Adrenal gland (tissue), 19 donors: ENCODE measurements at regions of chr16 and their contacts with region 1.

Region 1: GRCh38 chr16:10971560-10971961 is 27.2 kb downstream of the CLEC16A start:
- DNase-seq: peak in 5 of 7 donors; percentile 44 to 74 (median 58)
- H3K4me3 ChIP-seq: no peak overlapping the region
- H3K27ac ChIP-seq: no peak overlapping the region
- H3K4me1 ChIP-seq: no peaks in the 10 kb centered on the region
- H3K27me3 ChIP-seq: no peaks in the 10 kb centered on the region
- CTCF ChIP-seq: peak; percentile 74 to 88 (median 85)
- POLR2A ChIP-seq: no peak

Region 2: GRCh38 chr16:11032922-11033291 is 61.3 kb after region 1 on chr16:
- intact Hi-C with region 1: no loop called
- DNase-seq: peak in 6 of 7 donors; percentile 33 to 66 (median 44)
- H3K4me3 ChIP-seq: no peak overlapping the region
- H3K27ac ChIP-seq: peak overlapping the region in 2 of 5 donors; percentile 41 to 65
- H3K4me1 ChIP-seq: peaks cover 8 to 28% of the 10 kb centered on the region in 2 donors
- H3K27me3 ChIP-seq: no peaks in the 10 kb centered on the region
- CTCF ChIP-seq: no peak
- POLR2A ChIP-seq: no peak

Region 3: DNA sequence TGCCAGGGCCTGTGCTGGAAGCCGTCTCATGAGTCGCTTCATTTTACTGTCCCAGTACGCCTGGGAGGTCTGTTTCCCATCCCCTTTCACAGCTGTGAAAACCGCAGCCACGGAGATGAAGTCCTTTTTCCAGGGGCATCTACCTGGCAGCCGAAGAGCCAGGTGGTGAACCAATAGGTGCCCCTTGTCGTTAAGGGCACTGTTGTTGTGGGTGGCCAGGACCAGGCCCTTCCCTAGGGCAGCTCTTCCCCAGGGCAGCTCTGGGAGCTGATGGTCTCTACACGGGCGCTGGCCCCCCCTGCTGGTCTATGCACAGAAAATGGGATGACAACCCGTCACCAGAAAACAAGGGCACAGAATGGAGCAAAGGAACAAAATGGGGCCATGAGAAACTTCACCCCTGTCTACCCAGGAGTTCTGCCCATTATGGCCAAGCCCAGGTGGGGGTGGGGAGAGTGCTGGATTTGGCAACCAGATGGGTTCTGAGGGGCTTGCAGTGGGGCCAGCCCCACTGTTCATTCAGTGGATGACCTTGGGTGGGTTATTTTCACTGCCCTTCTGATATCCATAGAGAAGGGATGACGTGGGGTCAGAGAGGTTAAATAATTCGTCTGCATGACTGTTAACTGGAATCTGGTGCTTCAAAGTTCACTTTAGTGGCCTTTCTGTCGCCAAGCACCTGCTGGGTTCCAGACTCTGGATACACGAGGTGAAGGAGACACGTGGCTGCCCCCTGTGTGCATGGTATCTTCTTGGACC is 385.2 kb after region 1 on chr16:
- intact Hi-C with region 1: loop called in 1 of 2 experiments (anchors 5 kb)
- DNase-seq: peak in 6 of 7 donors; percentile 56 to 81 (median 62)
- H3K4me3 ChIP-seq: no peak overlapping the region
- H3K27ac ChIP-seq: no peak overlapping the region
- H3K4me1 ChIP-seq: peaks cover 10 to 18% of the 10 kb centered on the region in 2 donors
- H3K27me3 ChIP-seq: no peaks in the 10 kb centered on the region
- CTCF ChIP-seq: peak in 5 of 6 experiments; percentile 25 to 60 (median 54)
- POLR2A ChIP-seq: no peak